ENCODE measurements at regions of chr3 and their contacts with region 1.

Region 1: DNA sequence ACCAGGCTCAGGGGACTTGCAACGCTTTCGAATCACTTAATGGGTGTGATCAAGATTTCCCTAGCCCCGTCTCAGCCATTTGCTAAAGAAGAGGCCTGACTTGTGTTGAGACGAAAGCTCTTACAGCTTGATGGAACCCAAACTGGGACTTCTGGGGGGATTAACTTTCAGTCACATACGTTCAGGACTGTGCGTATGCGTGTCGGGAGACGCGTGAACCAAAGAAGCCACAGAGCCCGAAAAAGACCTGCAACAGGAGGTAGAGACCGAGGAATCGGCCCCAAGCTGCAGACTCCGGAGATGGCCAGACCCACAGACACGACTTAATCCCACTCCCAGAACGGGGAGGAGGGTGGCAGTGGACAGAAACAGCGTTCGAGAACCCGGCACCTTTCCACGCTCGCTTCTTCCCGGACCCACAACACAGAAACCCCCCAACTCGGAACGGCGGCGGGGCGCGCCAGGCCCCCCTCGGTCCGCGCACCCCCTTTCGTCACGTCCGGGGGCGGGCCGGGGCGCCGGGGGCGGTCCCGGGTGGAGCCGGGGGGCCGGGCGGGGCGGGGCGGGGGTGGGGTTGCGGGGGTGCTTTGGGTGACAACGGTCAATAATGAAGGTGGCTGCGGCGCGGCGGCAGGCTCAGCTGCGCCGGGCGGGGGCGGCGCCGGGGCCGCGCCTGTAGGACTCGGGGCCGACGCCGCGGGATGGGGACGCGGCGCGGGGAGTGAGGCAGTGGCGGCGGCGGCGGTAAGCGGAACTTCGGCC is at the start of gene ATP11B:
- DNase-seq: peak; percentile 69 to 91 (median 81)
- ATAC-seq: peak; percentile 73
- H3K4me3 ChIP-seq: peak within 1 kb of the TSS; percentile 86 to 96
- H3K4me3 Mint-ChIP-seq: peak within 1 kb of the TSS; percentile 99
- H3K27ac ChIP-seq: peak within 1 kb of the TSS; percentile 90 to 98
- H3K27ac Mint-ChIP-seq: peak within 1 kb of the TSS; percentile 100
- H3K4me1 ChIP-seq: peaks cover 22% of the 10 kb centered on the region
- H3K4me1 Mint-ChIP-seq: peaks cover 32% of the 10 kb centered on the region
- H3K27me3 ChIP-seq: no peaks in the 10 kb centered on the region
- H3K27me3 Mint-ChIP-seq: peaks cover 2% of the 10 kb centered on the region
- CTCF ChIP-seq: no peak
- total RNA-seq, gene ATP11B: 122 to 125 TPM

Region 2: DNA sequence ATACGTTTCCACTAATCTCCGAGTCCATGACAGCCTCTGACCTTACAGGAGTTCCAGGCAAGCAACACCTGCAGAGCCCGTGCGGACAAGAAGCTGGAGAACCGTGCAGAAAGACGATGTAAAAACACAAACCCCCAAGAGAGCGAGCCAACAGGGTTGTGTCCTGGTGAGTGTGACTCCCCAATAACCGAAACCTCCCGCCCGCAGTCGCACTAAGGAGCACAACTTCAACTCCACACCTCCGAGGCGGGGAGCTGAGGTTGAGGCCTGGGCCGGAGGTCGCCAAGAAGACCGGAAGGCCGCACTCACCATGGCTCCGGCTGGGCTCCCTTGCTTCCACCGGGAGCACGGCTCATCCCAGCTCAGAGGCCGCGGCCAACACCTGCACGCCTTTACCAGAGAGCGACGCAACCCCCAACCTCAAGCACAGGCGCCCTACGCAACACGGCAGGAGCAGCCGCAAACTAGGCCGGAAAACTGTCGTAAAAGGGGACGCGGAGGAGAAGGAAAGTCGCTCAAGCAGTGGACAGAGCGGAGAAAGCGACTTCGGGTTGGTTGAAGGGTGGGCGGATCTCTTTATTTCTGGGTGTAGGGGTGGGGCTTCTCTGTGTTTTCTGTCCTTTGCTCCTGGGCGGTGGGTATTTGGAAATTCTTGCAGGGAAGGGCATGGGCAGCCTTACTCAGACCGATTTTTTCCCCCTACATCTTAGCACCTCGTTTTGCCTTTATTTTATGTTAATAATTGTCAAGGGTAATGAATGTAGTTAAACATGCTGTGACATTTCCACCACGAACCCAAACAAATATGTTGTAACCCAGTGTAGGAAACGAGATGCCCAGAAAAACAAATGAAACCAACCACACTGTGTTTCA is 1803.6 kb before region 1 on chr3 and contains the start of gene DNAJC19:
- CTCF ChIA-PET with region 1: no interaction called
- POLR2A ChIA-PET with region 1: no interaction called
- intact Hi-C with region 1: loop called in 1 of 2 experiments (anchors 5 kb)
- DNase-seq: peak; percentile 82 to 97 (median 90)
- ATAC-seq: peak; percentile 95
- H3K4me3 ChIP-seq: peak within 1 kb of the TSS; percentile 74 to 93
- H3K4me3 Mint-ChIP-seq: peak within 1 kb of the TSS; percentile 97
- H3K27ac ChIP-seq: peak within 1 kb of the TSS; percentile 74
- H3K27ac Mint-ChIP-seq: peak within 1 kb of the TSS; percentile 97
- H3K4me1 ChIP-seq: peaks cover 11% of the 10 kb centered on the region
- H3K4me1 Mint-ChIP-seq: peaks cover 51% of the 10 kb centered on the region
- H3K27me3 ChIP-seq: no peaks in the 10 kb centered on the region
- H3K27me3 Mint-ChIP-seq: peaks cover 3% of the 10 kb centered on the region
- CTCF ChIP-seq: no peak
- total RNA-seq, gene DNAJC19: 35.5 to 42.3 TPM

Region 3: DNA sequence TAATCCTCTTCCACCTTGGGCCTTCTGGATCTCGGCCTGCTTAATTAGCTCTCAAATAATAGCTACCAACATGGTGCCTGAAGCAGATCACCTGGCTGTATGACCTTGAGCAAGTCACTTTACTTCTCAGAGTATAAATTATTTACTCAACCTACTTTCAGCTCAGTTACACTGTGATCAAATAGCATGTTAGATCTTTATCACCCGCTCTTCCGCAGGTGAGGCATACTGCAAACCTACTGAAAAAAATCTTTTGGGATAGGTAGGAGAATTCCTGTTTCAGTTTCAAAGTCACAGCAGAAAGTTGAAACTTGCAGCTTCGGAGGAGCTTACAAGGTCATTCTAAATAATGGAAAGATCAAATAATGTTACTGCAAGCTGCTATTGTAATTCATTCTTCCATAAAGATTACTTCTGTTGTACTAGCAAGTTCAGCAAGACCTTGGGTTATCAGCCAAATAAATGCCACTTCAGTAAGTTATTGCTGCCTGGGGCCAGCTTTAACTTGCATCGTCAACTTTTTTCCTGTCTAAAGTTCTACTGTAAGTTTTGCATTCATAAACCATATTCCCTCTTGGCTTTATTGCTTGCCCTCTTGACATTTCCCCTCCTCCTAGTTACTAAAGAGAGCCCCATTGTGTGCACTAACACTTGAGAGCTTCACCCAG is 268.2 kb before region 1 on chr3:
- CTCF ChIA-PET with region 1: no interaction called
- POLR2A ChIA-PET with region 1: no interaction called
- intact Hi-C with region 1: no loop called
- DNase-seq: no peak
- ATAC-seq: no peak
- H3K4me3 ChIP-seq: no peak overlapping the region
- H3K4me3 Mint-ChIP-seq: no peak overlapping the region
- H3K27ac ChIP-seq: no peak overlapping the region
- H3K27ac Mint-ChIP-seq: no peak overlapping the region
- H3K4me1 ChIP-seq: no peaks in the 10 kb centered on the region
- H3K4me1 Mint-ChIP-seq: no peaks in the 10 kb centered on the region
- H3K27me3 ChIP-seq: no peaks in the 10 kb centered on the region
- H3K27me3 Mint-ChIP-seq: peaks cover 6% of the 10 kb centered on the region
- CTCF ChIP-seq: no peak

Region 4: GRCh38 chr3:182837855-182838454 is 44.9 kb after region 1 on chr3:
- CTCF ChIA-PET with region 1: interaction called, 5 read pairs
- POLR2A ChIA-PET with region 1: interaction called, 6 read pairs
- intact Hi-C with region 1: loop called (anchors 2 to 5 kb)
- DNase-seq: peak in 2 of 9 experiments; percentile 27 to 52
- ATAC-seq: no peak
- H3K4me3 ChIP-seq: no peak overlapping the region
- H3K4me3 Mint-ChIP-seq: no peak overlapping the region
- H3K27ac ChIP-seq: no peak overlapping the region
- H3K27ac Mint-ChIP-seq: no peak overlapping the region
- H3K4me1 ChIP-seq: no peaks in the 10 kb centered on the region
- H3K4me1 Mint-ChIP-seq: no peaks in the 10 kb centered on the region
- H3K27me3 ChIP-seq: no peaks in the 10 kb centered on the region
- H3K27me3 Mint-ChIP-seq: no peaks in the 10 kb centered on the region
- CTCF ChIP-seq: peak; percentile 57

Region 5: GRCh38 chr3:182909318-182910040 is 116.4 kb after region 1 on chr3:
- CTCF ChIA-PET with region 1: no interaction called
- POLR2A ChIA-PET with region 1: no interaction called
- intact Hi-C with region 1: no loop called
- DNase-seq: peak in 2 of 9 experiments; percentile 28 to 49
- ATAC-seq: peak; percentile 41
- H3K4me3 ChIP-seq: no peak overlapping the region
- H3K4me3 Mint-ChIP-seq: no peak overlapping the region
- H3K27ac ChIP-seq: no peak overlapping the region
- H3K27ac Mint-ChIP-seq: no peak overlapping the region
- H3K4me1 ChIP-seq: peaks cover 20% of the 10 kb centered on the region
- H3K4me1 Mint-ChIP-seq: peaks cover 43% of the 10 kb centered on the region
- H3K27me3 ChIP-seq: no peaks in the 10 kb centered on the region
- H3K27me3 Mint-ChIP-seq: no peaks in the 10 kb centered on the region
- CTCF ChIP-seq: peak; percentile 70

Region 6: DNA sequence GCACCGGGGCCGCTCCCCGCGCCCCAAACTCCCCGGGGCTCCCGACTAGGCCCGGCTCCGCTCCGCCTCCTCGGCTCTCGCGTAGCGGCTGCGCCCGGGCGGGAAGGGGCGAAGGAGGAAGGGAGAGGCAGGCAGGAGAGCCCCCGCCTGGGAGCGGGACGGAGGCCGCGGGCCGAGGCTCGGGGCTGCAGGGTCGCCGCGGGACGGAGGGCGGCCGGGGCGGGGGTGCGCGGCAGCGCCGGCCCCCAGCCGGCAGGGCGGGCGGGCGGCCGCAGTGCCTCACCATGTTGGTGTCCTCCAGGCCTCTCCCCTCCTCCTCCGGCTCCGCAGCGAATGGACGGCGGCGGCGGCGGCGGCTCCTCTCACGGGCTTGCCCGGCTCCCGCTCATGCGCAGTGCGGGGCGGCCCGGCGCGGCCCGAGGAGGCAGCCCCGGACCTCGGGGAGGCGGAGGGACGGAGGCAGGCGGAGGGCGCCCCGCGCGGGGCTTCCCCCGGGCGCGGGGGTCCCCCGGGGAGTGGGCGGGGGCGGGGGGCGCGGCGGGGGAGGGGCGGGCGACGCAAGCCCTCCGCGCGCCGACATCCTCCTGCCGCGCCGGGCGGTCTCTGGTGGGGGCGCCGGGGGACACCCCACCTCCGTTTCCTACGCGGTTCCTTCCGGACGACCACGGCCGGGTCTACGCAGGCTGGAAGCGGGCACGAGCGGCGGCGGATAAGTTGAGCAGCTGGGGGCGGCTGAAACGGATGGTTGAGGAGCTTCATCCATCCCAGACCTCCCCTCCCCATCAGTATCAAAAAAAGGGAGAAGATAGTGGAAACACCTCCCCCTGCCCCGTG is 187.3 kb after region 1 on chr3 and contains the start of gene DCUN1D1:
- CTCF ChIA-PET with region 1: no interaction called
- POLR2A ChIA-PET with region 1: no interaction called
- intact Hi-C with region 1: loop called (anchors 2 to 5 kb)
- DNase-seq: peak; percentile 71 to 93 (median 85)
- ATAC-seq: peak; percentile 83
- H3K4me3 ChIP-seq: peak within 1 kb of the TSS; percentile 78 to 90
- H3K4me3 Mint-ChIP-seq: peak within 1 kb of the TSS; percentile 86
- H3K27ac ChIP-seq: peak within 1 kb of the TSS; percentile 63 to 80
- H3K27ac Mint-ChIP-seq: peak within 1 kb of the TSS; percentile 90
- H3K4me1 ChIP-seq: peaks cover 25% of the 10 kb centered on the region
- H3K4me1 Mint-ChIP-seq: peaks cover 39% of the 10 kb centered on the region
- H3K27me3 ChIP-seq: no peaks in the 10 kb centered on the region
- H3K27me3 Mint-ChIP-seq: no peaks in the 10 kb centered on the region
- CTCF ChIP-seq: no peak
- total RNA-seq, gene DCUN1D1: 45.3 to 50.4 TPM

Region 7: GRCh38 chr3:183099026-183099837 is 306.1 kb after region 1 on chr3 and contains the start of gene MCCC1:
- CTCF ChIA-PET with region 1: no interaction called
- POLR2A ChIA-PET with region 1: no interaction called
- intact Hi-C with region 1: loop called (anchors 1 to 10 kb)
- DNase-seq: peak; percentile 93 to 99 (median 97)
- ATAC-seq: peak; percentile 97
- H3K4me3 ChIP-seq: peak within 1 kb of the TSS; percentile 85 to 86
- H3K4me3 Mint-ChIP-seq: peak within 1 kb of the TSS; percentile 98
- H3K27ac ChIP-seq: peak within 1 kb of the TSS; percentile 72 to 76
- H3K27ac Mint-ChIP-seq: peak within 1 kb of the TSS; percentile 98
- H3K4me1 ChIP-seq: peaks cover 24% of the 10 kb centered on the region
- H3K4me1 Mint-ChIP-seq: peaks cover 43% of the 10 kb centered on the region
- H3K27me3 ChIP-seq: no peaks in the 10 kb centered on the region
- H3K27me3 Mint-ChIP-seq: no peaks in the 10 kb centered on the region
- CTCF ChIP-seq: no peak
- total RNA-seq, gene MCCC1: 12.8 to 25.9 TPM

Region 8: DNA sequence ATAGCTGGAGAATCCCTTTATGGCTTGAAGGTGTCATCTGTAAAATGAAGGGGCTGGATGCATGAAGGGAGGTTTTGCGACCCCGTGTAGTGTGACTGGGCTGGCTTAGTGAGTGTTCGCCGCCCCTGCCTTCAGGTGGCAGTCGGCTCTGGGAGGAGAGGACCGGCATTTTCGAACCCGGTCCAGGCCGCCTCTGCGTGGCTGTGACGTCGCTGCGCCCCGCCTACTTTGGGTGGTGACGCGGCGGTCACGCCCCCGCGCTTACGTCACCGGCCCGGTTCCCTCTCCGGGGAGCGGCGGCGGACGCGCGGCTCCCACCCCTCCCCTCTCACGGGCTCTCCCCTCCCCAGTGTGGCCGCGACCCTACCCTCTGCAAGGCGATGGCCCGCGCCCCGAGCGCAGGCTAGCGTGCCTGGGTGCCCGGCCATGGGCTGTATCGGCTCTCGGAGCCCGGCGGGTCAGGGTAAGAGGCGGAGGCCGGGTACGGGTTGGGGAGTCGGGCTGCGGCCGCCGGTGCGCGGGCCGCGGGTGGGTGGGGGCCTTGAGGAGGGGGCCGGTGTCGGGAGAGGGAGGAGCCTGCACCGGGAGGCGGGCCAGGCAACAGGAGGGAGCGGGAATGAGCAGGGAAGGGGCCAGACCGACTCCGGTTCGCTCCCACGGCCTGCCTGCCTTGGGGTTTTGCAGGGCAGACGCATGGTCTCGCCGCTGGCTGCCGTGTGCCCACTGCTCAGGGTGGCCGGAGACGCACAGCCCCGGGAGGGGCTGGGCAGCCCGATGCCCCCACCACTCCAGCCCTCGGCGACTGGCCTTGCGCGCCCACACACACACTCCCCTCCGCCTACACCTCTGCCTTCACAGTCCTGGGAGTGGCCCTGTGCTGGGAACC is 1542.8 kb after region 1 on chr3:
- CTCF ChIA-PET with region 1: no interaction called
- POLR2A ChIA-PET with region 1: no interaction called
- intact Hi-C with region 1: loop called in 1 of 2 experiments (anchors 10 kb)
- DNase-seq: peak; percentile 78 to 94 (median 86)
- ATAC-seq: peak; percentile 72
- H3K4me3 ChIP-seq: peak overlapping the region; percentile 50 to 63
- H3K4me3 Mint-ChIP-seq: peak overlapping the region; percentile 90
- H3K27ac ChIP-seq: peak overlapping the region; percentile 81 to 97
- H3K27ac Mint-ChIP-seq: peak overlapping the region; percentile 96
- H3K4me1 ChIP-seq: peaks cover 16% of the 10 kb centered on the region
- H3K4me1 Mint-ChIP-seq: peaks cover 25% of the 10 kb centered on the region
- H3K27me3 ChIP-seq: no peaks in the 10 kb centered on the region
- H3K27me3 Mint-ChIP-seq: no peaks in the 10 kb centered on the region
- CTCF ChIP-seq: no peak